Activated naive CD4-positive, alpha-beta T cell treated with anti-CD3 and anti-CD28 coated beads for 36 hours (primary cell): ENCODE measurements at regions of chr12 and their contacts with region 1.

Region 1: GRCh38 chr12:94980577-94980976 is 22.9 kb downstream of the NDUFA12 start:
- DNase-seq: no peak
- H3K4me3 Mint-ChIP-seq: no peak overlapping the region
- H3K27ac Mint-ChIP-seq: no peak overlapping the region
- H3K4me1 Mint-ChIP-seq: peaks cover 47% of the 10 kb centered on the region
- H3K27me3 Mint-ChIP-seq: no peaks in the 10 kb centered on the region

Region 2: GRCh38 chr12:94831081-94831751 is 149.4 kb before region 1 on chr12:
- CTCF ChIA-PET with region 1: no interaction called
- intact Hi-C with region 1: loop called (anchors 5 kb)
- DNase-seq: peak; percentile 68
- H3K4me3 Mint-ChIP-seq: no peak overlapping the region
- H3K27ac Mint-ChIP-seq: peak overlapping the region; percentile 72
- H3K4me1 Mint-ChIP-seq: peaks cover 23% of the 10 kb centered on the region
- H3K27me3 Mint-ChIP-seq: no peaks in the 10 kb centered on the region

Region 3: DNA sequence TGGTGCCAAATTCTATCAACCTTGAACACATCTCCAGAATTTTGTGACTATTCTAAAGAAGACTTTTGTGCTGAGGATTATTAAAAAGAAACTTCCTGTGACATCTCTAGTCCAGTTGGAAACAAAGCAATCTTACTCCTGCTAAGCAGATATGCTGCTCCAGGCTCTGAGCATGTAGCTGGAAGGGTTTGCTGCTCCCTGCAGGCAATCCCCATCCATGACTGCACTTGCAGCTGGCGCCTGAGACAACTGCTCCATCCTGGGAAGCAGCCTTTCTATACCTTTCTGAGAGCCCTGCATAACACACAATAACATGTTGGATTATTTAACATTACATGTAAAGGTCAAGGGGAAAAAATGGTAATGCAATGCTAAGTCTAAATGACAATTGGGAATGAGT is 82.2 kb before region 1 on chr12:
- CTCF ChIA-PET with region 1: no interaction called
- intact Hi-C with region 1: no loop called
- DNase-seq: no peak
- H3K4me3 Mint-ChIP-seq: no peak overlapping the region
- H3K27ac Mint-ChIP-seq: no peak overlapping the region
- H3K4me1 Mint-ChIP-seq: no peaks in the 10 kb centered on the region
- H3K27me3 Mint-ChIP-seq: no peaks in the 10 kb centered on the region

Region 4: DNA sequence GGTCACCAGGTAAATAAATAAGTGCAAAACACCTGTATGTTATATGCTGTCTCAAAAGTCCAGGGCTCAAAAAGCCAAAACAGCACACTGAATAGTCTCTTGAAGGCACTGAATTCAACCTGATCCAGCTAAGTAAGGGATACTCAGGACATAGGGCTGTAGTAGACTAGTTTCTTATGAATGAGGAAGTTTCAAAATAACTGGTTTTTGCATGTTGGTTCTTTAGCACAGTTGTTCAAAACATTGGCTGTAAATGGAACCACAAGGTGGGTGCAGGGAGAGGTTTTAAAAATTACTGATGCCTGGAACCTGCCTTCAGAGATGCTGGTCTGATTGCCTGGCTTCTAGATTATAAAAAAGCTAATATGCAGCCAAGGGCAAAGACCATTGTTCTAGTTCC is 11.2 kb before region 1 on chr12:
- CTCF ChIA-PET with region 1: no interaction called
- intact Hi-C with region 1: no loop called
- DNase-seq: no peak
- H3K4me3 Mint-ChIP-seq: no peak overlapping the region
- H3K27ac Mint-ChIP-seq: no peak overlapping the region
- H3K4me1 Mint-ChIP-seq: no peaks in the 10 kb centered on the region
- H3K27me3 Mint-ChIP-seq: no peaks in the 10 kb centered on the region

Region 5: GRCh38 chr12:94997061-94997460 is 16.5 kb after region 1 on chr12:
- CTCF ChIA-PET with region 1: no interaction called
- intact Hi-C with region 1: no loop called
- DNase-seq: no peak
- H3K4me3 Mint-ChIP-seq: no peak overlapping the region
- H3K27ac Mint-ChIP-seq: no peak overlapping the region
- H3K4me1 Mint-ChIP-seq: peaks cover 41% of the 10 kb centered on the region
- H3K27me3 Mint-ChIP-seq: no peaks in the 10 kb centered on the region

Region 6: DNA sequence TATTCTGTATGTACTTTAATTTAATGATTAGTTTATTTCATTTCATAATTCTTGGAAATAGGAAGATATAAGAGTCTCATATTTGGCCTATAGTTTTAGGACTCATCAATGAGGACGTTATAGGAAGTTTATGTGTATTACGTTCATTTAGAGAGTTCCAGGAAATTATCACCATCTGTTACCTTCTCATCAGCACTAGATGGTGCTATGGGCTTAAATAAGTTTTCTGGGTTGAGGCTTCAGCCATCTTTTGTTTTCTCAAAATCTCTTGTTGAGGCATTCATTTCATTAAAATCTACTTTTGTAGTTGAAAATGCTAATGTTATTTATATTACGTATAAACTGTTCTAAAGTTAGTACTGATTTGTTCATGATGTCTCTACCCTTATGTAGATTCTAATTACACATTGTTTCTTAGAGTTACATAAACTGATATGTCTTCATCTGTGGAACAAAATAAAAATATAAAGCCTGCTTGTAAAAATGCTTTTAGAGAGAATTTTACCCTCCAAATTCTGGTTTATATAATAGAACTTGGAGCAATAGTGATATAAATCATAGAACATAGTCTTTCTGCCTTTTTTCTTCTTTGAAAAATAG is 1598.0 kb after region 1 on chr12:
- CTCF ChIA-PET with region 1: no interaction called
- intact Hi-C with region 1: no loop called
- DNase-seq: no peak
- H3K4me3 Mint-ChIP-seq: no peak overlapping the region
- H3K27ac Mint-ChIP-seq: no peak overlapping the region
- H3K4me1 Mint-ChIP-seq: peaks cover 9% of the 10 kb centered on the region
- H3K27me3 Mint-ChIP-seq: peaks cover 5% of the 10 kb centered on the region